ENCODE measurements at regions of chr4 and their contacts with region 1.

Region 1: DNA sequence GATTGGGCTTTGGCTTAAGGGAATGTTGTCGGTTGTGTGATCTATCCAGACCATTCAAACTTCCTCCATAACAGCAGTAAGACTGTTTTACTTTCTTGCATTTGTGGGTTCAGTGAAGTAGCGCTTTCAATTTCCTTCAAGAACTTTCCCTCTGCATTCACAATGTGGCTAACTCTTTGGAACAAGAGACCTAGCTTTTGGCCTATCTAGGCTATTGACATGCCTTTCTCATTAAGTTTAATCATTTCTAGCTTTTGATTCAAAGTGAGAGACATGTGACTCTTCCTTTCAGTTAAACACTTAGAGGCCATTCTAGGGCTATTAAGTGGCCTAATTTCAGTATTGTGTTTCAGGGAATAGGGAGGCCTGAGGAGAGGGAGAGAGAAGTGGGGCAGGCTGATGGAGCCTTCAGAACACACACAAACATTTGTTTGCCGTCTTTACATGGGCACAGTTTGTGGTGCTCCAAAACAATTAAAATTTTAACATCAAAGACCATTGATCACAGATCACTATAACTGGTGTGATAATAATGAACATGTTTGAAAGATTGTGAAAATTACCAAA is 34.1 kb downstream of the ADH5 start:
- DNase-seq: no peak
- ATAC-seq: peak; percentile 25
- H3K4me3 Mint-ChIP-seq: no peak overlapping the region
- H3K27ac Mint-ChIP-seq: peak overlapping the region; percentile 60
- H3K4me1 Mint-ChIP-seq: peaks cover 38% of the 10 kb centered on the region
- H3K27me3 Mint-ChIP-seq: no peaks in the 10 kb centered on the region
- CTCF ChIP-seq: no peak

Region 2: GRCh38 chr4:98143001-98143899 is 911.3 kb before region 1 on chr4 and contains the start of gene STPG2:
- CTCF ChIA-PET with region 1: interaction called, 11 read pairs
- POLR2A ChIA-PET with region 1: no interaction called
- intact Hi-C with region 1: no loop called
- DNase-seq: peak; percentile 94
- ATAC-seq: peak; percentile 100
- H3K4me3 Mint-ChIP-seq: peak within 1 kb of the TSS; percentile 86
- H3K27ac Mint-ChIP-seq: peak within 1 kb of the TSS; percentile 97
- H3K4me1 Mint-ChIP-seq: peaks cover 15% of the 10 kb centered on the region
- H3K27me3 Mint-ChIP-seq: no peaks in the 10 kb centered on the region
- CTCF ChIP-seq: peak; percentile 73
- total RNA-seq, gene STPG2: 0.16 to 0.18 TPM

Region 3: GRCh38 chr4:98928505-98929340 is 125.8 kb before region 1 on chr4 and contains the start of gene EIF4E:
- CTCF ChIA-PET with region 1: interaction called, 6 read pairs
- POLR2A ChIA-PET with region 1: interaction called, 13 read pairs
- intact Hi-C with region 1: loop called (anchors 10 kb)
- DNase-seq: peak; percentile 98
- ATAC-seq: peak; percentile 78
- H3K4me3 Mint-ChIP-seq: peak within 1 kb of the TSS; percentile 88
- H3K27ac Mint-ChIP-seq: peak within 1 kb of the TSS; percentile 95
- H3K4me1 Mint-ChIP-seq: peaks cover 36% of the 10 kb centered on the region
- H3K27me3 Mint-ChIP-seq: no peaks in the 10 kb centered on the region
- CTCF ChIP-seq: peak; percentile 48
- total RNA-seq, gene EIF4E: 118 to 121 TPM

Region 4: GRCh38 chr4:98995183-98996055 is 59.1 kb before region 1 on chr4 and contains the start of gene METAP1:
- CTCF ChIA-PET with region 1: interaction called, 186 read pairs
- POLR2A ChIA-PET with region 1: interaction called, 14 read pairs
- intact Hi-C with region 1: loop called (anchors 2 kb)
- DNase-seq: peak; percentile 96
- ATAC-seq: peak; percentile 90
- H3K4me3 Mint-ChIP-seq: peak within 1 kb of the TSS; percentile 89
- H3K27ac Mint-ChIP-seq: peak within 1 kb of the TSS; percentile 97
- H3K4me1 Mint-ChIP-seq: peaks cover 38% of the 10 kb centered on the region
- H3K27me3 Mint-ChIP-seq: no peaks in the 10 kb centered on the region
- CTCF ChIP-seq: peak; percentile 44
- total RNA-seq, gene METAP1: 67.1 to 70.4 TPM

Region 5: DNA sequence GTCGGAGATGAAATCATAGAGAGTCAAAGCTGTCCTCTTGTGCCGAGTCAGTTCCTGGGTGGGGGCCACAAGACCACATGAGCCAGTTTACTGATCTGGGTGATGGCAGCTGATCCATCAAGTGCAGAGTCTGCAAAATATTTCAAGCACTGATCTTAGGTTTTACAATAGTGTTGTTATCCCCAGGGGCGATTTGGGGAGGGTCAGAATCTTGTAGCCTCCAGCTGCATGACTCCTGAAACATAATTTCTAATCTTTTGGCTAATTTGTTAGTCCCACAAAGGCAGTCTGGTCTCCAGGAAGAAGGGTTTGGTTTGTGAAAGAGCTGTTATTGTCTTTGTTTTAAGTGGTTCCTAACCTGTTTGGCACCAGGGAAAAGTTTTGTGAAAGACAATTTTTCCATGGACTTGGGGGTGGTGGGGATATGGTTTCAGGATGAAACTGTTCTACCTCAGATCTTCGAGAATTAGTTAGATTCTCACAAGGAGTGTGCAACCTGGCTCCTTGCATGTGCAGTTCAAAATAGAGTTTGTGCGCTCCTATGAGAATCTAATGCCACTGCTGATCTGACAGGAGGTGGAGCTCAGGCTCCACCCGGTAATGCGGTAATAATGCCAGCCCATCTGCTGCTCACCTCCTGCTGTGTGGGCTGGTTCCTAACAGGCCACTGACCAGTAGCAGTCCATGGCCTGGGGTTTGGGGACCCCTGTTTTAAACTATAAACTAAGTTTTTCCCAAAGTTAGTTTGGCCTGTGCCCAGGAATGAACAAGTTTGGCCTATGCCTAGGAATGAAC is 29.8 kb before region 1 on chr4:
- CTCF ChIA-PET with region 1: interaction called, 13 read pairs
- POLR2A ChIA-PET with region 1: no interaction called
- intact Hi-C with region 1: no loop called
- DNase-seq: no peak
- ATAC-seq: no peak
- H3K4me3 Mint-ChIP-seq: no peak overlapping the region
- H3K27ac Mint-ChIP-seq: no peak overlapping the region
- H3K4me1 Mint-ChIP-seq: peaks cover 63% of the 10 kb centered on the region
- H3K27me3 Mint-ChIP-seq: no peaks in the 10 kb centered on the region
- CTCF ChIP-seq: no peak

Region 6: DNA sequence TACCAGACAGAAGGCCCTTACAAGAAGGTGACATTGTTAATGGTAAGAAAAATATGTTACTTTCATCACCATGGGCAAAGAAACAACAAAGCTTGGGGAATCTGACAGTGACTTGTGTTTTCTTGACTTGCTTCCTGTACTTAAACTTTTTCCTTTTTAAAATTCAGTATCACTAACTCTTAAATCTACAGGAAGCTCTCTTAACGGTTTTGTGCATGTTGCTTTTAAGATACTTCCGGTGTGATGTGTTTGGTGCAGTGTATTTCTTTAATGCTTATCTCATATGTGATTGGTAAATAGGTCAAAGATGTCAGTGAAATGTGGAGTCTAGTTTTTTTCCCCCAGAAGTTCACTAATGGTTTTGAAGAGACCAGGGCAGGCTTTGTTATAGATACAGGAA is 11.2 kb before region 1 on chr4:
- CTCF ChIA-PET with region 1: interaction called, 14 read pairs
- POLR2A ChIA-PET with region 1: interaction called, 6 read pairs
- intact Hi-C with region 1: no loop called
- DNase-seq: no peak
- ATAC-seq: peak; percentile 81
- H3K4me3 Mint-ChIP-seq: no peak overlapping the region
- H3K27ac Mint-ChIP-seq: peak overlapping the region; percentile 82
- H3K4me1 Mint-ChIP-seq: peaks cover 19% of the 10 kb centered on the region
- H3K27me3 Mint-ChIP-seq: no peaks in the 10 kb centered on the region
- CTCF ChIP-seq: no peak

Region 7: GRCh38 chr4:99071159-99071558 is 16.6 kb after region 1 on chr4:
- CTCF ChIA-PET with region 1: interaction called, 21 read pairs
- POLR2A ChIA-PET with region 1: interaction called, 3 read pairs
- intact Hi-C with region 1: no loop called
- DNase-seq: no peak
- ATAC-seq: no peak
- H3K4me3 Mint-ChIP-seq: no peak overlapping the region
- H3K27ac Mint-ChIP-seq: no peak overlapping the region
- H3K4me1 Mint-ChIP-seq: no peaks in the 10 kb centered on the region
- H3K27me3 Mint-ChIP-seq: no peaks in the 10 kb centered on the region
- CTCF ChIP-seq: no peak

Region 8: DNA sequence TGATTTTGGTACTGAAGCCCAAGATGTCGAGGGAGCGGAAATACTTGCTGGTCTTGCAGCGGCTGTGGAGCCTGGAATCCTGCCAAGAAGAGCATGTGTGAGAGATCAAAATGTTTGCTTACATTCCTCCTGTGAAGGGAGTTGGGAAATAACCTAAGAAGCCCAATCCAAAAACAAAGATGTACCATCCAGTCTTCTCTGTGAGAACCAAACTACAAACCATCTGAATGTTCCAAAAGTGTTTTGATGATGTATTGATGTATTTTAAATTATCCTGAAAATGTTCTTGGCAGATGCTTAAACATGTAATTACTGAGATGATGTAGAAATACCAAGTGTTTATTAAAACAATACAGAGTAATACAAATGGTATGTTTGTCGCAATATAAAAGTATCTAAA is 246.4 kb after region 1 on chr4:
- CTCF ChIA-PET with region 1: no interaction called
- POLR2A ChIA-PET with region 1: no interaction called
- intact Hi-C with region 1: no loop called
- DNase-seq: no peak
- ATAC-seq: no peak
- H3K4me3 Mint-ChIP-seq: no peak overlapping the region
- H3K27ac Mint-ChIP-seq: no peak overlapping the region
- H3K4me1 Mint-ChIP-seq: no peaks in the 10 kb centered on the region
- H3K27me3 Mint-ChIP-seq: no peaks in the 10 kb centered on the region
- CTCF ChIP-seq: no peak

Region 9: DNA sequence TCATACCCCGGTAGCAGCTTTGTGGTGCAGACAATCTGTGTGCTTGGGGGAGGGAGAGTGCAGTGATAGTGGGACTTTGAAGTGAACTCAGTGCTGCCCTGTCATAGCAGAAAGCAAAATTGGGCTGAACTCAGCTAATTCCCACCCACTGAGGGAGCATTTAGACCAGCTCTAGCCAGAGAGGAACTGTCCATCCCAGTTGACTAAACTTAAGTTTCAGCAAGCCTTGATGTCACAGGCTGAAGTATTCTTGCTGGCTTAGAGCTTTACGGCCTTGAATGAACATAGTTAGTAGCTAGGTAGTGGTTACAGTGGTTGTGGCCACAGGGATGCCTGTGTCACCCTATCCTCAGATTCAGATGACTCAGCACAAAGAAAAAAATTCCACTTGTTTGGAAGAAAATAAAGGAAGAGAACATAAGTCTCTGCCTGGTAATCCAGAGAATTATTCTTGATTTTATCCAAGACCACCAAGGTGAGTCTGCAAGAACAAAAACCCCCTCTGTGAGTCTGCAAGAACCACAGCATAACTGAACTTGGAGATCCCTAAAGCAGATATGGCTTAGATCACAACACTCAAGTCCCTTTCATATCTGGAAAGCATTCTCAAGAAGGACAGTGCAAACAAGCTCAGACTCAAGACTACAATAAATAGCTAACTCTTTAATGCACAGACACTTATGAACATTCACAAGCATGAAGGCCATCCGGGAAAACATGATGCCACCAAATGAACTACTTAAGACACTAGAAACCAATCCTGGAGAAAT is 341.3 kb after region 1 on chr4:
- CTCF ChIA-PET with region 1: no interaction called
- POLR2A ChIA-PET with region 1: no interaction called
- intact Hi-C with region 1: no loop called
- DNase-seq: no peak
- ATAC-seq: no peak
- H3K4me3 Mint-ChIP-seq: no peak overlapping the region
- H3K27ac Mint-ChIP-seq: no peak overlapping the region
- H3K4me1 Mint-ChIP-seq: no peaks in the 10 kb centered on the region
- H3K27me3 Mint-ChIP-seq: peaks cover 3% of the 10 kb centered on the region
- CTCF ChIP-seq: no peak